ENCODE measurements at regions of chr4 and their contacts with region 1.

Region 1: GRCh38 chr4:97910005-97910404 is 233.3 kb downstream of the STPG2 start:
- DNase-seq: peak; percentile 60
- ATAC-seq: peak; percentile 88
- H3K4me3 ChIP-seq: no peak overlapping the region
- H3K27ac ChIP-seq: no peak overlapping the region
- H3K4me1 ChIP-seq: no peaks in the 10 kb centered on the region
- H3K27me3 ChIP-seq: no peaks in the 10 kb centered on the region
- CTCF ChIP-seq: peak; percentile 60

Region 2: DNA sequence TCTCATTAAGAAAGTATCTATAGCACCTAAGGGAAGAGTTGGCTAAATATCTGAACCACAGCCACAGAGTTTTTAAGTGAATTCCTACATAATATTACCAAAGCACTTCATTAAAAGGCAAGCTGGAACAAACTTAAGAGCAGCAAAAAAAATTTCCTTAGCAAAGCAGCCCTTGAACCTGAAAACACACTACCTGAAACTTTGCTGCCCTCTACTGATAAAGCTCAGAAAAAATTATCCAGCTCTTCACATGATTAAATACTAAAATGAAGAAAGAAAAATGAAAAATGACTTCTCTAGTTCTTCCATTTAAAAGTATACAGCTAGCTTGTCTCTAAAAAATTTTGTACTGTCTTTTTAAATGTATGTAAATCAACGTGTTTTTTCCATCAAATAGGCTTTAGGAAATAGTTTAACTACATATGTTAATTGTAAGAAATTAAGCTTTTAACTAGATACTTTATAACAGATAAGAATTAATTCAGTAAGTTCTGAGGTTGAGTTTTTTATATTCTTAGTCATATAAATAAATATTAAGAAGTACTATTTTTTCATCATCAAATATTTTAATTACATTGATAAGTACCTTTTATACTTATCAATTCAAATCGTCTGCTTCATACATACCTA is 77.1 kb after region 1 on chr4:
- CTCF ChIA-PET with region 1: no interaction called
- POLR2A ChIA-PET with region 1: no interaction called
- intact Hi-C with region 1: loop called (anchors 10 kb)
- DNase-seq: peak; percentile 56
- ATAC-seq: no peak
- H3K4me3 ChIP-seq: no peak overlapping the region
- H3K27ac ChIP-seq: no peak overlapping the region
- H3K4me1 ChIP-seq: no peaks in the 10 kb centered on the region
- H3K27me3 ChIP-seq: no peaks in the 10 kb centered on the region
- CTCF ChIP-seq: peak; percentile 70

Region 3: DNA sequence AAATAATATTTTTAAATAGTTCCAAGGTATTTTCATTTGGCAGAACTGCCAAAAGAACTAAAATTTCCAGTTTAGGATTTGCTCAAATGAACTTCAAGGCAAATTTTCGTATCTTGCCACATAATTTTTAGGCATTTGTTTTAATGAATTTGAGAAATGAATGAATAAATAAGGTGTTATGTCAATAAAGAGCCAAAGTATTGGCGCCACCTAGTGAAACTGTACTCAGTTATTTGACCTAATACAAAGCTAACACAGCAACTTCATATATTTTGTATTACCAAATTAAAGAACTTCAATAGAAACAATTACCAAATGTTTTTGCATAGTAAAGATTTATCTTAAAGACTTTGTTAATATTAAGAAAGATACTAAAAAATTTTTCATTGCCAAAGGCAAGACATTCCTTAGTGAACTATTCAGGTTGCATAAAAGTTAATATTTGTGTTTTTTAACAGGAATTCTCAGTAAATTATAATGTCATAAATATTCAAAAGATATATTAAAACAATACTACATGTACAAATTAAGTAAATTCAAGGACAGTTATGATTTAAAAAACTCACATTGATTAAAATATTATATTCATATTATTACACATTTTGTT is 182.9 kb after region 1 on chr4:
- CTCF ChIA-PET with region 1: no interaction called
- POLR2A ChIA-PET with region 1: no interaction called
- intact Hi-C with region 1: loop called (anchors 10 kb)
- DNase-seq: peak; percentile 44
- ATAC-seq: no peak
- H3K4me3 ChIP-seq: no peak overlapping the region
- H3K27ac ChIP-seq: no peak overlapping the region
- H3K4me1 ChIP-seq: peaks cover 14% of the 10 kb centered on the region
- H3K27me3 ChIP-seq: no peaks in the 10 kb centered on the region
- CTCF ChIP-seq: peak; percentile 72